ENCODE measurements at regions of chr15 and their contacts with region 1.

Region 1: DNA sequence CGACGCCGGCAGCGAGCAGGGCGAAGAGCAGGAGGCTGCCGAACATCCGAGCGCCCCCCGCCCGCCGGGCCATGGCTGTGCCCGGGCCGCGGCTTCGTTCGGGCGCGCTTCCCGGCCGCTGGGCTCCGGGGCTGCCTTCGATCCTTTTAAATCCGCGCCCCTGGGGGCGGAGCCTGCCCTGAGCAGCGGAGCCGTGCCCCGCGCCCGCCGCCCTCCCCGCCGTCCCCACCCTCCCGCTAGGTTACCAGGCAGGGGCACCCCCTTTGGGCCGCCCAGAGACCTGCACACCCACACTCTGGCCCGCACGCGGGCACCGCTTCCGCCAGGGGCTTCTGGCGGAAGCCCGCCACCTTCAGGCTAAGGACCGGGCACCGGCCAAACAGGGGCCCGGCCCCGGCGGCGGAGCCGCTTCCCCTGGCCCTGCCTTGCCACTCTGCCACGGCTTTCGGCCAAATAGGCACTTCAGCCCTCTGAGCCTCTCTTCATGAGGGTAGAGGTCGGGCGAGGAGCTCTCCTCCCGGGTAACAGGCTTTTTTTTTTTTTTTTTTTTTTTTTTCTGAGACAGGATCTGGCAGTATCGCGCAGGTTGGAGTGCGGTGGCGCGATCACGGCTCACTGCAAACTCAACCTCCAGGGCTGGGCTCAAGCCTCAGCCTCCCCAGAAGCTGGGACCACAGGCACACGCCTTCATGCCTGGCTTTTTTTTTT is at the start of gene NMB:
- DNase-seq: peak; percentile 81 to 91 (median 86)
- H3K4me3 ChIP-seq: peak within 1 kb of the TSS; percentile 64
- H3K4me3 Mint-ChIP-seq: peak within 1 kb of the TSS; percentile 73 to 94 (median 80)
- H3K27ac ChIP-seq: peak within 1 kb of the TSS; percentile 68
- H3K27ac Mint-ChIP-seq: peak within 1 kb of the TSS; percentile 29 to 91 (median 79)
- H3K4me1 ChIP-seq: peaks cover 25% of the 10 kb centered on the region
- H3K4me1 Mint-ChIP-seq: peaks cover 30 to 49% (median 47%) of the 10 kb centered on the region in 3 donors
- H3K27me3 ChIP-seq: no peaks in the 10 kb centered on the region
- H3K27me3 Mint-ChIP-seq: peaks cover 0 to 2% of the 10 kb centered on the region in 2 donors
- total RNA-seq, gene NMB: 3.6 to 5.2 TPM

Region 2: GRCh38 chr15:84588053-84588874 is 70.0 kb before region 1 on chr15:
- CTCF ChIA-PET with region 1: interaction called, 10 read pairs
- POLR2A ChIA-PET with region 1: interaction called, 4 read pairs
- DNase-seq: peak; percentile 74 to 87 (median 77)
- H3K4me3 ChIP-seq: peak overlapping the region; percentile 37
- H3K4me3 Mint-ChIP-seq: peak overlapping the region in 5 of 7 donors; percentile 33 to 73 (median 70)
- H3K27ac ChIP-seq: no peak overlapping the region
- H3K27ac Mint-ChIP-seq: no peak overlapping the region
- H3K4me1 ChIP-seq: peaks cover 7% of the 10 kb centered on the region
- H3K4me1 Mint-ChIP-seq: peaks cover 5 to 6% (median 6%) of the 10 kb centered on the region in 3 donors
- H3K27me3 ChIP-seq: no peaks in the 10 kb centered on the region
- H3K27me3 Mint-ChIP-seq: peaks cover 0 to 21% of the 10 kb centered on the region in 2 donors

Region 3: DNA sequence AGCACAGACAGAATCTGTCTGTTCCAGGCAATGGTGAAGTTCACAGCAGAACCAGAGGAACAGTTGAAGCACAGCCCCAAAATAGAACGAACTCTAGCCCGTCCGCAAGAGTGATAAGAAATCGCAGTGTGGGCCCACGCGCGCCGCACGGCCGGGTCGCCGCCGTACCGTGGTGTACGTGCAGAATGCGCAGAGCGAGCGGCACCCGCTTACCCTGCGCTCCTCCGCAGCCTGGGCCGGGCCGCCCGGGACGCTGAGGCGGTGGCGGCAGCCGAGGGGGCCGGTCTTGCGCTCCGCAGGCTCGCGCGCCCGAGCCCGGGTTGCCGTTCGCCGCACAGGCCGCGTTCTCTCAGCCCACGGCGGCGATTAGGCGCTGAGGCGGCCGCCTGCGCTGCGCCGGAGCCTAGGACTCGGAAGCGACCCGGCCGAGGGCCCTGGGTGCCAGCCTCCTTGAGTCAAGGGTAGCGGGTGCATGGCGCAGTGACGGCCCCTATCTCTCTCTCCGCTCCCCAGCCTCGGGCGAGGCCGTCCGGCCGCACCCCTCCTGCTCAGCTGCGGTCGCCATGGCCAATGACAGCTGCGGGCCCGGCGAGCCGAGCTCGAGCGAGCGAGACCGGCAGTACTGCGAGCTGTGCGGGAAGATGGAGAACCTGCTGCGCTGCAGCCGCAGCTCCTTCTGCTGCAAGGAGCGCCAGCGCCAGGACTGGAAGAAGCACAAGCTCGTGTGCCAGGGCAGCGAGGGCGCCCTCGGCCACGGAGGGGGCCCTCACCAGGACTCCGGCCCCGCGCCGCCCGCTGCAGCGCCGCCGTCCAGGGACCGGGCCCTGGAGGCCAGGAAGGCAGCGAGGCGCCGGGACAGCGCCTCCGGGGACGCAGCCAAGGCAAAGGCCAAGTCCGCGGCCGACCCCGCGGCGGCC is 24.7 kb before region 1 on chr15:
- CTCF ChIA-PET with region 1: interaction called, 30 read pairs
- POLR2A ChIA-PET with region 1: interaction called, 18 read pairs
- DNase-seq: peak; percentile 44 to 75 (median 63)
- H3K4me3 ChIP-seq: peak overlapping the region; percentile 82
- H3K4me3 Mint-ChIP-seq: peak overlapping the region; percentile 86 to 99 (median 95)
- H3K27ac ChIP-seq: peak overlapping the region; percentile 66
- H3K27ac Mint-ChIP-seq: peak overlapping the region; percentile 89 to 97 (median 94)
- H3K4me1 ChIP-seq: peaks cover 52% of the 10 kb centered on the region
- H3K4me1 Mint-ChIP-seq: peaks cover 41 to 54% (median 49%) of the 10 kb centered on the region in 3 donors
- H3K27me3 ChIP-seq: no peaks in the 10 kb centered on the region
- H3K27me3 Mint-ChIP-seq: peaks cover 0 to 2% of the 10 kb centered on the region in 2 donors

Region 4: DNA sequence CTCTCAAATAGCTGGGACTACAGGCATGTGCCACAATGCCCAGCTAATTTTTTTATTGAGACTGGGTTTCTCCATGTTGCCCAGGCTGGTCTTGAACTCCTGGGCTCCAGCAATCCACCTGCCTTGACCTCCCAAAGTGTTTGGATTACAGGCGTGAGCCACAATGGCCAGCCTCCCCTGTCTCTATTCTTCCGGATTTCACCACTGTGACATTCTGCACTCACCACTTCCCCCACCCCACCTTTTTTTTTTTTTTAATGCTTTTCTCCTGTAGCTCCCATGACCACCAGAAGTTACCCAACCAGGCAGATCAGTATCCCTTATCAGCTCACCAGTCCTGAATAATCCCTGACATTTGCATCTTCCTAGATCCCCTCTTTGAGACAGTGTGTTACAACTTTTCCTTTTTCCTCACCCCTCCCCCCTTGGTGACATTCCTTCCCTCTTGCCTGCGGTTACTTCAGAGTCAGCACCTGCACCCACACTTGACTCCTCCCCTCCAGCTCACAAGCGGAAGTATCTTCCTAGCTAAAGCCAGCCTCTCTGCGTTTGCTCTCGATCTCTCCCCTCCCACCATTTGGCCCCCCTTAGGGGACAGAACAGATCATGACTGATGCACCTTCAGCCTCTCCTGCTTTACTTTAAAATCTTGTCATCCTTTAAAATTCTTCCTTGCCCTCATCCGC is 76.7 kb after region 1 on chr15:
- CTCF ChIA-PET with region 1: interaction called, 17 read pairs
- POLR2A ChIA-PET with region 1: interaction called, 7 read pairs
- DNase-seq: peak; percentile 40 to 82 (median 67)
- H3K4me3 ChIP-seq: peak overlapping the region; percentile 49
- H3K4me3 Mint-ChIP-seq: peak overlapping the region; percentile 69 to 93 (median 83)
- H3K27ac ChIP-seq: peak overlapping the region; percentile 57
- H3K27ac Mint-ChIP-seq: peak overlapping the region; percentile 81 to 99 (median 90)
- H3K4me1 ChIP-seq: peaks cover 53% of the 10 kb centered on the region
- H3K4me1 Mint-ChIP-seq: peaks cover 37 to 52% (median 46%) of the 10 kb centered on the region in 3 donors
- H3K27me3 ChIP-seq: no peaks in the 10 kb centered on the region
- H3K27me3 Mint-ChIP-seq: no peaks in the 10 kb centered on the region

Region 5: GRCh38 chr15:84929744-84930371 is 271.6 kb after region 1 on chr15:
- CTCF ChIA-PET with region 1: interaction called, 11 read pairs
- POLR2A ChIA-PET with region 1: interaction called, 3 read pairs
- DNase-seq: no peak
- H3K4me3 ChIP-seq: no peak overlapping the region
- H3K4me3 Mint-ChIP-seq: no peak overlapping the region
- H3K27ac ChIP-seq: peak overlapping the region; percentile 9
- H3K27ac Mint-ChIP-seq: peak overlapping the region in 2 of 8 donors; percentile 29 to 63
- H3K4me1 ChIP-seq: peaks cover 3% of the 10 kb centered on the region
- H3K4me1 Mint-ChIP-seq: peaks cover 4 to 6% (median 5%) of the 10 kb centered on the region in 3 donors
- H3K27me3 ChIP-seq: no peaks in the 10 kb centered on the region
- H3K27me3 Mint-ChIP-seq: no peaks in the 10 kb centered on the region